CD14-positive monocyte (primary cell): ENCODE measurements at regions of chr7 and their contacts with region 1.

Region 1: GRCh38 chr7:106285051-106285854 is 470 bp upstream of the NAMPT start:
- DNase-seq: peak; percentile 99 to 100 (median 100)
- H3K4me3 ChIP-seq: peak overlapping the region; percentile 79 to 98 (median 92)
- H3K4me3 Mint-ChIP-seq: peak overlapping the region; percentile 96
- H3K27ac ChIP-seq: peak overlapping the region; percentile 94 to 95
- H3K27ac Mint-ChIP-seq: peak overlapping the region; percentile 94 to 99 (median 99)
- H3K4me1 ChIP-seq: peaks cover 20 to 35% of the 10 kb centered on the region in 2 donors
- H3K4me1 Mint-ChIP-seq: peaks cover 27% of the 10 kb centered on the region
- H3K27me3 ChIP-seq: no peaks in the 10 kb centered on the region
- H3K27me3 Mint-ChIP-seq: peaks cover 3 to 20% (median 4%) of the 10 kb centered on the region in 3 donors
- CTCF ChIP-seq: no peak

Region 2: DNA sequence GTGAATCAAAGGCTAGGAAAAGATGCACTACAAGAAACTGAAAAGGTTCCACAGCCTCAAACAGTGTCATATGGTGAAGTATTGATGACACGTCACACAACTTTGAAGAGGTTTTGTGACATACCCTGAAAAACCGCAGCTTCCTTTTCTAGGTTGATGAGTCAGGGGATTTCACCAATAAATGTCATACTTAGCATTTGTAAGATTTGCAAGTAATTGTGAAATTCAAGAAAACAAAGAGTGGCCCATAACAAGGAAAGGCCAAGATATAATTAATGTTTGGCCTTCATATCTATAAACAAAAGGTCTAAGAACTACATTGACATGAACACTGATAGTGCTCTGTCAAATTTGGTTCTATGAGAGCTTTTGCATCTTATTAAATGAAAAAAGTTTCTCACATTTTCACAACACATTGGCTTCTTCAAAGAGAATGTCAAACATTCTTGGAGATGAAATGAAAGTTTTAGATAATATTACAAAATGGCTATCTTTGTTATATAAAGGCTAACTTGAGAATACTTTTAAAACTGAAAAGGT is 61.5 kb after region 1 on chr7:
- intact Hi-C with region 1: loop called (anchors 1 to 2 kb)
- DNase-seq: peak; percentile 94 to 99 (median 98)
- H3K4me3 ChIP-seq: peak overlapping the region in 1 of 3 experiments; percentile 21
- H3K4me3 Mint-ChIP-seq: peak overlapping the region; percentile 21 to 48
- H3K27ac ChIP-seq: peak overlapping the region; percentile 59 to 97
- H3K27ac Mint-ChIP-seq: peak overlapping the region; percentile 96 to 99 (median 98)
- H3K4me1 ChIP-seq: peaks cover 40 to 43% of the 10 kb centered on the region in 2 donors
- H3K4me1 Mint-ChIP-seq: peaks cover 44% of the 10 kb centered on the region
- H3K27me3 ChIP-seq: peaks cover 0 to 4% of the 10 kb centered on the region in 2 donors
- H3K27me3 Mint-ChIP-seq: peaks cover 1 to 11% (median 2%) of the 10 kb centered on the region in 3 donors
- CTCF ChIP-seq: no peak

Region 3: DNA sequence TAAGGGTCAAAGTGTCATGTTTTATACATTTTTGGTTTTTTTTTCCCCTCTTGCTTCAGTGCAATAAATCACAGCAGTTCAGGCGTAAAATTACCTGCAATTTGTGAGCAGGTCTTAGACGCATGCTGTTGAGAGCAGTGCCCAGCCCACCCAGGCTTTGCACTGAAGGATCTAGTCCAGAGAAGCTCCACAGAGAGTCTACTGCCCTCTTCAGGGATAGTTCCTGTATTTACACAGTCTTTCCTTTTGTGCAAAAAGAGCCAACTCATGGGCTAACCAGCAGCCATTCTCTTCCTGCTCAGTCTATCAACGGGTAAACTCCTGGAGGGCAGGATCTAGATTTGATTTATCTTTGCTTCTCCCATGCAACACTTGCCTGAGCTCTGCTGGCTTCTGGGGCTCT is 81.8 kb after region 1 on chr7:
- intact Hi-C with region 1: loop called (anchors 5 kb)
- DNase-seq: peak; percentile 59 to 83 (median 78)
- H3K4me3 ChIP-seq: no peak overlapping the region
- H3K4me3 Mint-ChIP-seq: no peak overlapping the region
- H3K27ac ChIP-seq: no peak overlapping the region
- H3K27ac Mint-ChIP-seq: peak overlapping the region; percentile 64 to 95 (median 90)
- H3K4me1 ChIP-seq: peaks cover 18 to 27% of the 10 kb centered on the region in 2 donors
- H3K4me1 Mint-ChIP-seq: peaks cover 35% of the 10 kb centered on the region
- H3K27me3 ChIP-seq: no peaks in the 10 kb centered on the region
- H3K27me3 Mint-ChIP-seq: peaks cover 0 to 3% (median 0%) of the 10 kb centered on the region in 3 donors
- CTCF ChIP-seq: peak; percentile 78

Region 4: DNA sequence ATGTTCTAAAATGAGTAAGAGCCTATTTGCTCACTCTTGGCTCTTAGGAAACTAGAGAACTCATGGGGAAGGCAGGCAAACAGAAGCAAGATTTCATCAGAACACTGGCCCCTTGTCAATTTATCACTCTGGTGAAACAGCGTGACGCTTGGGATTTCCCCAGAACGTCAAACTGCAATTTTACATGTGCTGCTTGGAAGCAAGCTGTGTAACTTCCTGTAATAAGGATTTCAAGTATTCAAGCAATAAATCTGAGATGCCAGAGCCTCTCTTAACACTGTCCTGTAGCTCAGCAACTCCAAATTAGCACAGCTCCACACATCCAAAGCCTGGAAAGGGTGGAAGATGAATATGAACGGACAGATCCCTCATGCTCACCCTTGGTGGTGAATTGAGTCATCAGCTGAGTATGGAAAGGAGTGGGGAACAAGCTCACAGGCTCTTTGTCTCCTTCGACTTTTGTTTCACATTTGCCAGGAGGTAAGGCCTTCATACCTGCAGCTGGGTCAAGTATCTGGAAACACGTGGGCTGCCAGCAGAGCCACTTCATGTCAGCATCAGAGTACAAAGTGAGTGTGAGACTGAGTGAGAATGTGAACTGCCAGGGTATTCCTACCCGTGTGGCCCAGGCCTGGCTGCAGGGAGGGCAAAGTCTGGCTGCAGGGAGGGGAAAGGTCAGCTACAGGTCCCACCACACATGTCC is 139.9 kb after region 1 on chr7:
- intact Hi-C with region 1: loop called in 1 of 2 experiments (anchors 5 kb)
- DNase-seq: peak; percentile 98 to 100 (median 99)
- H3K4me3 ChIP-seq: peak overlapping the region in 2 of 3 experiments; percentile 10 to 14
- H3K4me3 Mint-ChIP-seq: peak overlapping the region; percentile 46 to 52
- H3K27ac ChIP-seq: peak overlapping the region; percentile 86 to 96
- H3K27ac Mint-ChIP-seq: peak overlapping the region; percentile 98 to 100 (median 99)
- H3K4me1 ChIP-seq: peaks cover 49 to 57% of the 10 kb centered on the region in 2 donors
- H3K4me1 Mint-ChIP-seq: peaks cover 56% of the 10 kb centered on the region
- H3K27me3 ChIP-seq: no peaks in the 10 kb centered on the region
- H3K27me3 Mint-ChIP-seq: peaks cover 0 to 2% (median 0%) of the 10 kb centered on the region in 3 donors
- CTCF ChIP-seq: no peak

Region 5: GRCh38 chr7:106450716-106451115 is 165.5 kb after region 1 on chr7:
- intact Hi-C with region 1: loop called in 1 of 2 experiments (anchors 10 kb)
- DNase-seq: no peak
- H3K4me3 ChIP-seq: no peak overlapping the region
- H3K4me3 Mint-ChIP-seq: no peak overlapping the region
- H3K27ac ChIP-seq: no peak overlapping the region
- H3K27ac Mint-ChIP-seq: peak overlapping the region in 1 of 7 donors; percentile 6
- H3K4me1 ChIP-seq: peaks cover 5 to 7% of the 10 kb centered on the region in 2 donors
- H3K4me1 Mint-ChIP-seq: peaks cover 6% of the 10 kb centered on the region
- H3K27me3 ChIP-seq: no peaks in the 10 kb centered on the region
- H3K27me3 Mint-ChIP-seq: no peaks in the 10 kb centered on the region
- CTCF ChIP-seq: no peak

Region 6: DNA sequence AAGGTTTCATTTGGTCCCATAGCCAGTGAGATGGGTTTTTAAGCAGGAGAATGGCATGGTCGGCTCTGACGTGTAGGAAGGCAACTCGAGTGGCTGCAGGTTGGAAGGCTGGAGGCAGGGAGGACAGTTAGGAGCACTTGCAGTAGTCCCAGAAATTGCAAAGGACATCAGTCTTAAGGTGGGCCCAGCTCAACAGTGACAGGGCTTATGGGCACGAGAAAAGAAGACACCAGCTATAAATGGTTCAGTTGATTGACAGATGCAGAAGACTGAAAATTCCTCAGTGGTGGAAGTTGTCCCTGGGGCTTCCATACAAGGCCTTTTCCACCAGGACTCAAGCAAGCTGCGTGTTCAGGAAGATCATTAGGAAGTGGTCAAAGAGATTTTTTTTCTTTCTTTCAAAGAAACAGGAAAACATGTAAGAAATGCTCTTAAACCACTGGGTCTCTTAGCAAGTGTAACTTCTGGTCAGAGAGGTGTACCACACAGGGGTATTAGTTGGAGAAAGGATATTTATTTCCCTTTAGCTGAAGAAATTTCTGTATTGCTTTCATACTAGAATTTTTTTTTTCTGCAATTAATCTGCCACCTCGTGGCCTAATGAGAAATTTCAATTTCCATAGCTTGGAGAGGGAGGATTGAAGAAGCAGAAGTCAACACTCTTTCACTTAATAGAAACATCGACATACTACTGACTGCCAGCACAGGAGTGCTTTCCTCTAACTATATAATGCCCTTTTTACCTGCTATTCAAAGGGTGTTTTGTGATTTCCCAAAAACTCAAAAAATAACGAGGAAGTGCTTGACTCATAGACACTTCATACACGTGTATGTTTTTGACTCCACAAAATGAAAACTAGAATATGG is 177.0 kb after region 1 on chr7:
- intact Hi-C with region 1: loop called (anchors 5 to 10 kb)
- DNase-seq: peak; percentile 53 to 70 (median 58)
- H3K4me3 ChIP-seq: no peak overlapping the region
- H3K4me3 Mint-ChIP-seq: no peak overlapping the region
- H3K27ac ChIP-seq: no peak overlapping the region
- H3K27ac Mint-ChIP-seq: peak overlapping the region in 5 of 7 donors; percentile 10 to 76 (median 58)
- H3K4me1 ChIP-seq: no peaks in the 10 kb centered on the region
- H3K4me1 Mint-ChIP-seq: peaks cover 6% of the 10 kb centered on the region
- H3K27me3 ChIP-seq: no peaks in the 10 kb centered on the region
- H3K27me3 Mint-ChIP-seq: no peaks in the 10 kb centered on the region
- CTCF ChIP-seq: peak; percentile 73